ENCODE measurements at regions of chr2 and their contacts with region 1.

Region 1: DNA sequence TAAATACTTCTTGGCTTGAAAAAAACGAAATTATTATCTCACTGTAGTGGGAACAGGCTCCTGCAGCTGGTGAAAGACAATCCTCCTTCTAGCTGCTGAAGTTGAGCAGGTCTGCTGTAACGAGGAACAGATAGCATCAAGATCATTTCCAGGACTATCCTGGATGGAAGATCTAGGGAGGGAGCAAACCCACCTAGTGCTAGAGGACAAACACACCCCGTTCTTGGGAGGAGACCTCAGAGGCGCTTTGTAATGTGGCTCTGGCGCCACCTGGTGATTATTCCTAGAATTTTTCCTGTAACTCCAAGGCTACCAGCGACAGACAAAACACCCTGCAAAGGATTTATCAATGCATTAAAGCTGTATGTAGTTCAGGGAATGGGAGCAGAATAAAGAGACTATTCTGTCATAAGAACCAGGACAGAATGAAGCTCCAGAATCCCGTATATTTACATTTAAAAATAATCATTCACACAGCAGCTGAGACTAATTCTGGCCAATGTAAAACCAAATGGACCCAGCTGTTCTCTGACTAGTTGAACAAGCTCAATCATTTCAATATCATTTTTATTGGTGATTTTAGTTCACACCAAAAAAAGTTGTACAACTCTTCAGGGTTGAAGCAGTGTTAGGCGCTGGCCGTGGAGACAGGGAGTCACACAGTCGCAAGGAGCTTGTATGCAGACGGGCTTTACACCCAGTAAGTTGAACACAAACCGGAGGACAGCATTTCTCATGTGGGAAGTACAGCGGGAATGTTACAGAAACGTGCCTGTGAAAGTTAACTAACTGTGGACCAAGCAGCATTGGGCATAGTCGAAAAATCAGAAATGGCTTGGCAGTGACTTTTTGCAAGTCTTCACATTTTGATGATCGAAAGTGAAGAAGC is 290.3 kb downstream of the TRIB2 start:
- ATAC-seq: peak; percentile 65 to 99 (median 95)
- H3K4me3 ChIP-seq: no peak overlapping the region
- H3K27ac ChIP-seq: no peak overlapping the region
- H3K4me1 ChIP-seq: peaks cover 4 to 6% of the 10 kb centered on the region in 2 donors

Region 2: GRCh38 chr2:11829947-11830707 is 1176.9 kb before region 1 on chr2:
- in situ Hi-C with region 1: loop called in 5 of 9 experiments (anchors 10 to 25 kb)
- ATAC-seq: peak; percentile 83 to 99 (median 96)
- H3K4me3 ChIP-seq: peak overlapping the region in 4 of 5 donors; percentile 3 to 15 (median 10)
- H3K27ac ChIP-seq: peak overlapping the region; percentile 17 to 29
- H3K4me1 ChIP-seq: peaks cover 13 to 15% of the 10 kb centered on the region in 2 donors

Region 3: GRCh38 chr2:12416600-12416999 is 590.5 kb before region 1 on chr2:
- in situ Hi-C with region 1: loop called in 1 of 9 experiments (anchors 25 kb)
- ATAC-seq: peak in 3 of 8 experiments; percentile 95 to 97 (median 96)
- H3K4me3 ChIP-seq: no peak overlapping the region
- H3K27ac ChIP-seq: no peak overlapping the region
- H3K4me1 ChIP-seq: peaks cover 10 to 14% of the 10 kb centered on the region in 2 donors

Region 4: DNA sequence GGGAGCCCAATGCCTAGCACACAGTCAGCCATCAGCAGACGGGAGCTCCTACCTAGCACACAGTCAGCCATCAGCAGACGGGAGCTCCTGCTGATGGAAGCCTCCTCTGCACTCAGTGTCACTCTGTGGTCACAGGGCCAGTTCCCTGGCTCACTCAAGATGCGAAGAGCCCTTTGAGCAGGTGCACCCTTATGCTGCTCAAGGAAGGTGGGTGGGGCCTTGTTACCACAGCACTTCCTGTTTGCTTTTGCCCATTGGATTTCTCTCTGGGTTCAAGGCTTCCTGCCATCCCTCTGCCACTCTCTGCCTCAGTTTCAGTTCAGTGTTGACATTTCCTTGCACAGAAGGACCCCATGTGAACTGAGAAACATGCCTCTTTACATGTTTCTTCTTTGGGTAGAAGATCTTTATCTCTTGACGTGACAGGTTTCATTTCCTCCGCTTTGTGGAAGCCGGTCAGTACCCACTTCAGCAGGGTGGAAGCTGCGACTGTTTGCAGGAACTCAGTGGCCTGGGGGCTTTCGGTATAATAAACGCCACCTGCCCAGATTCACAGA is 278.8 kb before region 1 on chr2:
- in situ Hi-C with region 1: loop called in 2 of 9 experiments (anchors 25 kb)
- ATAC-seq: no peak
- H3K4me3 ChIP-seq: no peak overlapping the region
- H3K27ac ChIP-seq: no peak overlapping the region
- H3K4me1 ChIP-seq: peaks cover under 1 to 9% of the 10 kb centered on the region in 2 donors

Region 5: GRCh38 chr2:12824778-12825379 is 182.2 kb before region 1 on chr2:
- in situ Hi-C with region 1: loop called in 1 of 9 experiments (anchors 25 kb)
- ATAC-seq: peak in 6 of 8 experiments; percentile 7 to 73 (median 34)
- H3K4me3 ChIP-seq: no peak overlapping the region
- H3K27ac ChIP-seq: no peak overlapping the region
- H3K4me1 ChIP-seq: peaks cover 13 to 28% of the 10 kb centered on the region in 2 donors